ENCODE measurements at regions of chr11 and their contacts with region 1.

Region 1: GRCh38 chr11:121328967-121329679 is 36.6 kb downstream of the SC5D start:
- DNase-seq: no peak
- H3K4me3 Mint-ChIP-seq: no peak overlapping the region
- H3K27ac Mint-ChIP-seq: no peak overlapping the region
- H3K4me1 Mint-ChIP-seq: no peaks in the 10 kb centered on the region
- H3K27me3 Mint-ChIP-seq: peaks cover 12% of the 10 kb centered on the region

Region 2: DNA sequence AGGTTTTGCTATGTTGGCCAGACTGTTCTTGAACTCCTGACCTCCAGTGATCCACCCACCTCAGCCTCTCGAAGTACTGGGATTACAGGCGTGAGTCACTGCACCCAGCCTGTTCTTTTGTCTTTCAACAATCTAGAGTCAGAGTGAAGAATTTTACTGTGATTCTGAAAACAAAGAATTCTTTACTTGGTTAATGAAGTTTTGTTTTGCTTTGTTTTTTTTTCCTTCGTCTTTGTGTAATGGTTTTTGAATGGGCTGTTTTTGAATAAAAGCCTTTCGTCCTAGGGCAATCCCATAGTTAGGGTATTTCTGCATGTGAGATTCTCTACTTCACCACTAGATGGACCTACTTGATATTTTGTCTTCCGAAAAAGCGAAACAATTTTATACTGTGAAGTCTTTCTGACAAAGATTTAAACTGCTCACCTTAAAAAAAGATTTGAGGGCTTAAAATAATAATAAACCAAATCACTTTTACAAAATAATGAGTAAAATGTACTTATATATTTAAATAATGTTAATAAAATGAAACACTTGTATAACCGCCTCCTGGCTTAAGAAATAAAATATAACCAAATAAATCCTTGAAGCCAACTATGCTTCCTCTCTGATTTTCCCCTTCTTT is 80.0 kb before region 1 on chr11:
- intact Hi-C with region 1: no loop called
- DNase-seq: no peak
- H3K4me3 Mint-ChIP-seq: no peak overlapping the region
- H3K27ac Mint-ChIP-seq: no peak overlapping the region
- H3K4me1 Mint-ChIP-seq: no peaks in the 10 kb centered on the region
- H3K27me3 Mint-ChIP-seq: peaks cover 10% of the 10 kb centered on the region

Region 3: GRCh38 chr11:121309688-121310087 is 19.4 kb before region 1 on chr11:
- intact Hi-C with region 1: loop called (anchors 2 kb)
- DNase-seq: no peak
- H3K4me3 Mint-ChIP-seq: no peak overlapping the region
- H3K27ac Mint-ChIP-seq: no peak overlapping the region
- H3K4me1 Mint-ChIP-seq: peaks cover 23% of the 10 kb centered on the region
- H3K27me3 Mint-ChIP-seq: no peaks in the 10 kb centered on the region

Region 4: DNA sequence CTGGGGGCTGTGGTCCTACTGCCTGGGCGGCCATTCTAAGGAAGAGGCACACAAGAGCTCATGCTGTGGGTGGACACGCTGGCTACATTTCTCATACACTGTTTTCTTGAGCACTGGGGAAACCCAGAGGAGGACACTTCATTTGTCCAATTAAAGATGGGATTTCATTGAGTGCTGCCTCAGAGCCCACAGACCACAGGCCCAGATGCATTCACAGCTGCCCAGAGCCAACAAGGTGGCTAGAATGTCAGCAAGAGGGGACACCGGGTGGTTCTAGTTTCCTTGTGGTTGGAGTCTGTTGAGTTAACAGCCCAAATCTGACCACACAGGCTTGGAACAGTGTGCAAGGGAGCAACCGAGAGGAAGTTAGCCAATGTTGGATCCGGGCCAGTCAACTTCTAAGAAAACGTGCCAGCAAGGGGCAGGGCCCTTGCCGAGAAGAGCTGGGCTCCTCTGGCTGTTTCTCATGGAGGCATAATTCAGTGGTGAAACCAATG is 88.0 kb after region 1 on chr11:
- intact Hi-C with region 1: loop called (anchors 5 kb)
- DNase-seq: peak; percentile 33
- H3K4me3 Mint-ChIP-seq: no peak overlapping the region
- H3K27ac Mint-ChIP-seq: peak overlapping the region; percentile 51
- H3K4me1 Mint-ChIP-seq: peaks cover 51% of the 10 kb centered on the region
- H3K27me3 Mint-ChIP-seq: no peaks in the 10 kb centered on the region

Region 5: GRCh38 chr11:121655537-121656327 is 326.6 kb after region 1 on chr11:
- intact Hi-C with region 1: no loop called
- DNase-seq: peak; percentile 55
- H3K4me3 Mint-ChIP-seq: peak overlapping the region; percentile 77
- H3K27ac Mint-ChIP-seq: peak overlapping the region; percentile 34
- H3K4me1 Mint-ChIP-seq: peaks cover 16% of the 10 kb centered on the region
- H3K27me3 Mint-ChIP-seq: peaks cover 27% of the 10 kb centered on the region